A549 (cell line): ENCODE measurements at regions of chr22 and their contacts with region 1.

Region 1: GRCh38 chr22:24768537-24769374 is 5.8 kb downstream of the PIWIL3 start:
- DNase-seq: peak; percentile 61 to 68
- ATAC-seq: peak; percentile 91 to 95
- H3K4me3 ChIP-seq: no peak overlapping the region
- H3K27ac ChIP-seq: no peak overlapping the region
- H3K4me1 ChIP-seq: no peaks in the 10 kb centered on the region
- CTCF ChIP-seq: peak; percentile 58
- EP300 ChIP-seq: no peak
- POLR2A ChIP-seq: no peak
- RAD21 ChIP-seq: peak; percentile 76

Region 2: GRCh38 chr22:24688256-24688655 is 80.5 kb before region 1 on chr22:
- CTCF ChIA-PET with region 1: no interaction called
- POLR2A ChIA-PET with region 1: no interaction called
- DNase-seq: no peak
- ATAC-seq: no peak
- H3K4me3 ChIP-seq: no peak overlapping the region
- H3K27ac ChIP-seq: no peak overlapping the region
- H3K4me1 ChIP-seq: 0 out of 3 replicates have a peak, but pooled peaks cover 4% of the 10 kb centered on the region
- CTCF ChIP-seq: no peak
- EP300 ChIP-seq: no peak
- POLR2A ChIP-seq: no peak
- RAD21 ChIP-seq: no peak

Region 3: GRCh38 chr22:24789516-24789915 is 20.8 kb after region 1 on chr22:
- CTCF ChIA-PET with region 1: interaction called, 13 read pairs
- POLR2A ChIA-PET with region 1: no interaction called
- DNase-seq: no peak
- ATAC-seq: no peak
- H3K4me3 ChIP-seq: no peak overlapping the region
- H3K27ac ChIP-seq: no peak overlapping the region
- H3K4me1 ChIP-seq: no peaks in the 10 kb centered on the region
- CTCF ChIP-seq: no peak
- EP300 ChIP-seq: no peak
- POLR2A ChIP-seq: no peak
- RAD21 ChIP-seq: no peak

Region 4: GRCh38 chr22:24816806-24817205 is 48.0 kb after region 1 on chr22:
- CTCF ChIA-PET with region 1: interaction called, 10 read pairs
- POLR2A ChIA-PET with region 1: no interaction called
- DNase-seq: no peak
- ATAC-seq: no peak
- H3K4me3 ChIP-seq: no peak overlapping the region
- H3K27ac ChIP-seq: no peak overlapping the region
- H3K4me1 ChIP-seq: peaks cover 15% of the 10 kb centered on the region
- CTCF ChIP-seq: no peak
- EP300 ChIP-seq: no peak
- POLR2A ChIP-seq: no peak
- RAD21 ChIP-seq: no peak

Region 5: GRCh38 chr22:25002241-25002985 is 233.7 kb after region 1 on chr22:
- CTCF ChIA-PET with region 1: no interaction called
- POLR2A ChIA-PET with region 1: no interaction called
- DNase-seq: no peak
- ATAC-seq: no peak
- H3K4me3 ChIP-seq: no peak overlapping the region
- H3K27ac ChIP-seq: peak overlapping the region in 1 of 2 experiments; percentile 21; a peak in 1 of 6 replicates
- H3K4me1 ChIP-seq: peaks cover 9% of the 10 kb centered on the region
- CTCF ChIP-seq: no peak
- EP300 ChIP-seq: no peak
- POLR2A ChIP-seq: no peak
- RAD21 ChIP-seq: no peak

Region 6: DNA sequence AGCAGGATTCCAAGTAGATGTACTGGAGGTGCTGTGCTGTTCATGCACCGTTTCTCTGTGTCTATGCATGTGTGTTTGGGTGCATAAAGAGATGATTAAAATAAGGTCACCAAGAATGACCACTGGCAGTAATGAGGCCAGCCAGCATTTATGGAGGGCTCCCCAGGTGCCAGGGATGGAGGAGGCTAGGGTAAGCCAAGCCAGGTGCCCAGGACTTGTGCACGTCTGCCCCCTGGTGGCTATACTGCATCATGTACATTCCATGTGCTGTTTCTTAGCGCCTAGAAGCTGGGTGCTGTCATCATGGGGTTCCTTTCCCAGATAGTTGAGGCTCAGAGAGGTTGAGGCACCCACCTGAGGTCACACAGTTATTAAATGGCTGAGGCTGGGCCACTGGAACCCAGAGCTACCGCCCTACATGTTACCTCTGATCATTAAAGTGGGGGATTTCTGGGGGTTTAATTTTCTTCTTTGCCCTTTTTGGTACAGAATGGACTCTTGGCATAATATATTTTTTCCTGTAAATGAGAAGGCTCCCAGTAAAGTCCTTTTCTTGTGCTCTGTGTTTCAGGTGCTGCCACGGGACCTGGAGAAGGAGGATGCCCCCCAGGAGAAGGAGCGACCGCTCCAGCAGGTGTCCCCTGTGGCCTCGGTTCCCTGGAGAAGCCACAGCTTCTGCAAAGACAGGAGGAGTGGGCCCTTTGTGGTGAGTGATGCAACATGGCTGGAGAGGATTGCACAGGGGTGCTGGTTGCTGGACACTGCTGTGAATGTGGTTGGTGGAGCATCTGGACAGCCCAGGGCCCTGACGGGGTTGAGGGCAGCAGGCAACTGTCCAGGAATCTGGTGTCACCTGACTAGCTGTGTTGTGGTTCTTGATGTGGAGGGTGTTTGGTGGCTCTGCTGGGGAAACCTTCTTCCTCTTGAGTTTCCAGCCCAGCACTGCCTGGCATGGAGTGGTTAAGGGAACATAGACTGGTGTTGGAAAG is 280.2 kb after region 1 on chr22:
- CTCF ChIA-PET with region 1: interaction called, 32 read pairs
- POLR2A ChIA-PET with region 1: no interaction called
- DNase-seq: peak; percentile 64
- ATAC-seq: peak; percentile 92 to 96
- H3K4me3 ChIP-seq: no peak overlapping the region
- H3K27ac ChIP-seq: no peak overlapping the region
- H3K4me1 ChIP-seq: peaks cover 4% of the 10 kb centered on the region; the same call in 1 of the 3 replicates
- CTCF ChIP-seq: peak; percentile 75
- EP300 ChIP-seq: no peak
- POLR2A ChIP-seq: no peak
- RAD21 ChIP-seq: peak; percentile 80 to 86